Ascending aorta (tissue), 2 donors: ENCODE measurements at regions of chr6 and their contacts with region 1.

Region 1: GRCh38 chr6:150600301-150601017 is 774 bp downstream of the PLEKHG1 start:
- DNase-seq: peak; percentile 39 to 88
- H3K4me3 ChIP-seq: peak overlapping the region; percentile 70 to 95
- H3K27ac ChIP-seq: peak overlapping the region; percentile 71 to 79
- H3K4me1 ChIP-seq: no peaks in the 10 kb centered on the region
- H3K27me3 ChIP-seq: no peaks in the 10 kb centered on the region
- CTCF ChIP-seq: peak; percentile 39 to 62 (median 52)

Region 2: GRCh38 chr6:150579611-150580010 is 20.8 kb before region 1 on chr6:
- intact Hi-C with region 1: loop called (anchors 1 kb)
- DNase-seq: peak in 1 of 2 donors; percentile 86
- H3K4me3 ChIP-seq: no peak overlapping the region
- H3K27ac ChIP-seq: no peak overlapping the region
- H3K4me1 ChIP-seq: peaks cover 0 to 16% of the 10 kb centered on the region in 2 donors
- H3K27me3 ChIP-seq: no peaks in the 10 kb centered on the region
- CTCF ChIP-seq: no peak

Region 3: GRCh38 chr6:150641398-150642139 is 41.1 kb after region 1 on chr6:
- intact Hi-C with region 1: loop called (anchors 5 kb)
- DNase-seq: no peak
- H3K4me3 ChIP-seq: peak overlapping the region; percentile 31 to 52
- H3K27ac ChIP-seq: peak overlapping the region; percentile 41 to 56
- H3K4me1 ChIP-seq: peaks cover 3 to 13% of the 10 kb centered on the region in 2 donors
- H3K27me3 ChIP-seq: no peaks in the 10 kb centered on the region
- CTCF ChIP-seq: no peak